Heart left ventricle (tissue), 16 donors: ENCODE measurements at regions of chr1 and their contacts with region 1.

Region 1: GRCh38 chr1:20507564-20508410 is at the start of gene MUL1:
- DNase-seq: peak; percentile 96 to 97 (median 97)
- ATAC-seq: peak; percentile 97 to 99 (median 98)
- H3K4me3 ChIP-seq: peak within 1 kb of the TSS; percentile 72 to 95 (median 84)
- H3K27ac ChIP-seq: peak within 1 kb of the TSS; percentile 72 to 93 (median 90)
- H3K4me1 ChIP-seq: peaks cover 0 to 45% (median 35%) of the 10 kb centered on the region in 12 donors
- H3K27me3 ChIP-seq: peaks cover 0 to 6% (median 0%) of the 10 kb centered on the region in 9 donors
- CTCF ChIP-seq: no peak
- POLR2A ChIP-seq: peak; percentile 25 to 77
- total RNA-seq, gene MUL1: 34.5 to 57.1 (median 41.2) TPM

Region 2: GRCh38 chr1:20448671-20449071 is 59.1 kb before region 1 on chr1:
- intact Hi-C with region 1: no loop called
- DNase-seq: no peak
- ATAC-seq: no peak
- H3K4me3 ChIP-seq: no peak overlapping the region
- H3K27ac ChIP-seq: no peak overlapping the region
- H3K4me1 ChIP-seq: no peaks in the 10 kb centered on the region
- H3K27me3 ChIP-seq: peaks cover 0 to 32% (median 6%) of the 10 kb centered on the region in 9 donors
- CTCF ChIP-seq: no peak
- POLR2A ChIP-seq: no peak

Region 3: GRCh38 chr1:20702416-20702815 is 194.6 kb after region 1 on chr1:
- intact Hi-C with region 1: no loop called
- DNase-seq: no peak
- ATAC-seq: peak in 1 of 4 donors; percentile 25
- H3K4me3 ChIP-seq: no peak overlapping the region
- H3K27ac ChIP-seq: no peak overlapping the region
- H3K4me1 ChIP-seq: peaks cover 0 to 4% (median 0%) of the 10 kb centered on the region in 12 donors
- H3K27me3 ChIP-seq: no peaks in the 10 kb centered on the region
- CTCF ChIP-seq: no peak
- POLR2A ChIP-seq: no peak

Region 4: GRCh38 chr1:20727384-20728316 is 219.9 kb after region 1 on chr1:
- intact Hi-C with region 1: loop called in 1 of 10 experiments (anchors 10 kb)
- DNase-seq: no peak
- ATAC-seq: no peak
- H3K4me3 ChIP-seq: no peak overlapping the region
- H3K27ac ChIP-seq: no peak overlapping the region
- H3K4me1 ChIP-seq: peaks cover 0 to 22% (median 8%) of the 10 kb centered on the region in 12 donors
- H3K27me3 ChIP-seq: peaks cover 4 to 45% (median 25%) of the 10 kb centered on the region in 9 donors
- CTCF ChIP-seq: peak in 1 of 12 donors; percentile 7
- POLR2A ChIP-seq: no peak